GM12878 (cell line): ENCODE measurements at regions of chr11 and their contacts with region 1.

Region 1: DNA sequence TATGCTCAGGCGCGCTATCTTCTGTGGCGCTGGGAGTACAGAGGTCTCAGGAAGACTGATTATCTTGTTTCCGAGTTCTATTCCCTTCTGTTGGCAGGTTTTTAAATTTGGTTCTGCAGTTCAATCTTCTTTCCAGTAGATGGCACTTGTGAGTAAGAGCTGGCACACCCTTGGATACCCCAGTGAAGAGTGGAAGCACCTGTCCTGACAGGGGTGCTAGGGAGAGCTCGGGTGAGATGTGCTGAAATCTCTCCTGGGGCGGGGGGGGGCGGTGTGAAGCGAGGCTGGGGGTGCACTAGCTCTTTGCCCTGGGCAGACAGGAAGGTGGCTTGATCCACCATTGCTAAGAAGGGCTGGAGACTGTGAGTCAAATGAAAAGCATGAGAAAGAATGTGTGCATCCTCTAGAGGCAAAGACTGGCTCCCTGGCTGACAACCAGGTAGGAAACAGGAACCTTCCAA is 679.9 kb upstream of the CCDC179 start:
- DNase-seq: peak; percentile 5
- ATAC-seq: peak; percentile 96
- H3K4me3 ChIP-seq: no peak overlapping the region
- H3K27ac ChIP-seq: no peak overlapping the region
- H3K4me1 ChIP-seq: no peaks in the 10 kb centered on the region
- H3K27me3 ChIP-seq: no peaks in the 10 kb centered on the region
- CTCF ChIP-seq: peak; percentile 68 to 77 (median 72)
- EP300 ChIP-seq: no peak
- POLR2A ChIP-seq: no peak
- RAD21 ChIP-seq: peak; percentile 70

Region 2: GRCh38 chr11:23520226-23520960 is 19.7 kb before region 1 on chr11:
- CTCF ChIA-PET with region 1: interaction called, 11 read pairs
- POLR2A ChIA-PET with region 1: no interaction called
- RAD21 ChIA-PET with region 1: no interaction called
- SMC1A ChIA-PET with region 1: interaction called, 10 read pairs
- in situ Hi-C with region 1: no loop called
- intact Hi-C with region 1: no loop called
- DNase-seq: no peak
- ATAC-seq: no peak
- H3K4me3 ChIP-seq: no peak overlapping the region
- H3K27ac ChIP-seq: no peak overlapping the region
- H3K4me1 ChIP-seq: no peaks in the 10 kb centered on the region
- H3K27me3 ChIP-seq: no peaks in the 10 kb centered on the region
- CTCF ChIP-seq: no peak
- EP300 ChIP-seq: no peak
- POLR2A ChIP-seq: no peak
- RAD21 ChIP-seq: no peak